ENCODE measurements at regions of chr6 and their contacts with region 1.

Region 1: GRCh38 chr6:137707590-137708360 is 159.3 kb upstream of the TNFAIP3 start:
- DNase-seq: peak; percentile 68
- H3K4me3 ChIP-seq: peak overlapping the region in 1 of 3 experiments; percentile 30
- H3K27ac ChIP-seq: no peak overlapping the region
- H3K4me1 ChIP-seq: peaks cover 4% of the 10 kb centered on the region
- H3K27me3 ChIP-seq: no peaks in the 10 kb centered on the region
- CTCF ChIP-seq: peak; percentile 60 to 68
- POLR2A ChIP-seq: no peak

Region 2: GRCh38 chr6:137799950-137800568 is 92.3 kb after region 1 on chr6:
- CTCF ChIA-PET with region 1: interaction called, 39 read pairs
- POLR2A ChIA-PET with region 1: no interaction called
- dilution Hi-C with region 1: no loop called
- intact Hi-C with region 1: loop called (anchors 5 kb)
- DNase-seq: peak; percentile 68
- H3K4me3 ChIP-seq: no peak overlapping the region
- H3K27ac ChIP-seq: no peak overlapping the region
- H3K4me1 ChIP-seq: no peaks in the 10 kb centered on the region
- H3K27me3 ChIP-seq: no peaks in the 10 kb centered on the region
- CTCF ChIP-seq: peak; percentile 53 to 66
- POLR2A ChIP-seq: no peak

Region 3: DNA sequence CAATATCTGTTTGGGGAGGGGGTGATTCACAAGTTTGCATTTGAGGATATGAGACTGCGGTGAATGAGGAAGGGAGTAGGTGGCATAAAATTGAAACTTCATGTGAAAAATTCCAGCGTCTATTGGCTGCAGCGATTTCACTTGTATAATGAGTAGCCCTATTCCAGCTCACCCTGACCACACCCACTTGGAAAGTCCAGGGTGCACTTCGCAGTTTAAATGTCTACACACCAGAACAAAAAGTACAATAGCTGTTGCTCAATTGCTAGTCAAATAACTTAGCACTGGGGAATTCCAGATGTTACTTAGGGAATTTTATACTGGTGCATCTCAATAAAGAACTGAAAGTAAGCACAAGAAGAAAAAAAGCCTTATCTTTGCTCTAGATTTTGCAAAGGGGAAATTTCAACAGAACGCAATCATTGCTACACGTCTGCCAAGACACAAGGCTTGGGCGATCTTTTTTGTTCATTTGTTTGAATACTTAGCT is 165.5 kb after region 1 on chr6:
- CTCF ChIA-PET with region 1: interaction called, 64 read pairs
- POLR2A ChIA-PET with region 1: interaction called, 3 read pairs
- dilution Hi-C with region 1: no loop called
- intact Hi-C with region 1: no loop called
- DNase-seq: peak; percentile 88
- H3K4me3 ChIP-seq: no peak overlapping the region
- H3K27ac ChIP-seq: peak overlapping the region; percentile 53
- H3K4me1 ChIP-seq: peaks cover 41% of the 10 kb centered on the region
- H3K27me3 ChIP-seq: no peaks in the 10 kb centered on the region
- CTCF ChIP-seq: no peak
- POLR2A ChIP-seq: peak; percentile 22

Region 4: DNA sequence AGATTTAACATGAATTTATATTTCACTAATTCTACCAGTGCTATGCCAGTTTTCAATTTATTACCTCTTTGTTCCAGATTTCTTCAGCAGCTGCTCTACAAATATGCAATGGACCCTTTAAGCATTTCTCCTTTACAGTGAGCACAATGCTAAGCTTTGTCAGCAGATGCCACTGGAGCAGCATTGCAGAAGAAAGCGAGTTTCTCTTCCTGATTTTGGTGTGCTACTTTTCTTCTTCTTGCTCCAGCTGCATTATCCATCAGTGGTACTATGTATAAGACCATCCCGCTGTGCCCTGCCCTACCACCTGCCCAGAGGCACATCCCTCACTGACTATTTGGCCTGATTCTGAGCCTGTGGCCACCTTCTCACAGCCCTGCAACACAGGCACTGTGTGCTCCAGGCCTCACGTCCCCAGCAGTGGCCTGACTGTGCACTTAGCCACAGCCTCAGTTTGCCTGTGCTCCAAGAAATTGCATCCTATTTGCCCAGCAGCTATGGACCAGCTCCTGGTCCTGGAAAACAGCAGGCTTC is 243.4 kb after region 1 on chr6:
- CTCF ChIA-PET with region 1: interaction called, 103 read pairs
- POLR2A ChIA-PET with region 1: no interaction called
- dilution Hi-C with region 1: no loop called
- intact Hi-C with region 1: no loop called
- DNase-seq: no peak
- H3K4me3 ChIP-seq: no peak overlapping the region
- H3K27ac ChIP-seq: no peak overlapping the region
- H3K4me1 ChIP-seq: no peaks in the 10 kb centered on the region
- H3K27me3 ChIP-seq: no peaks in the 10 kb centered on the region
- CTCF ChIP-seq: no peak
- POLR2A ChIP-seq: no peak

Region 5: DNA sequence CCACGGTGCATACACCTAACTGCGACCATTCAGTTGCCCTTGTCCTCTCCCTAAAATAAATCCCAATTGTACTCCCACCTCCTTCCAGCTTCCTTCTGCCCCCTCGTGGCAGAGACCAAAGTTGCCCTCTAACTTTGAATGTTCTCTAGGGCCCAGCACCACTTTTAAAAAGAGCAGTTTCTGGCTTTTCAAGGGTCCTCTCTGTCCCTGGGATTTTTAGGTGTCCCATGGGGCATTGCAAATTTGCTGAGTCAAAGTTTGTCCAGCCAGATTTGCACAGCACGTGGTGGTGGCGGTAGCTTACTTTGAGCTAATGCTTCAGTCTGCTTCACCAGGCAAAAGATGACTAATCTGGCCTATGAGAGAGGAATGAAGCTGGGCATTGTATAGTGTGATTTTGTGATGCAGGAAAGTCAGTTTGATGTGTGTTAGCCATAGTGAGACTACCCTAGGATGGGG is 299.3 kb after region 1 on chr6:
- CTCF ChIA-PET with region 1: interaction called, 72 read pairs
- POLR2A ChIA-PET with region 1: no interaction called
- dilution Hi-C with region 1: no loop called
- intact Hi-C with region 1: loop called (anchors 1 kb)
- DNase-seq: peak; percentile 27
- H3K4me3 ChIP-seq: no peak overlapping the region
- H3K27ac ChIP-seq: no peak overlapping the region
- H3K4me1 ChIP-seq: no peaks in the 10 kb centered on the region
- H3K27me3 ChIP-seq: no peaks in the 10 kb centered on the region
- CTCF ChIP-seq: peak; percentile 50 to 63
- POLR2A ChIP-seq: no peak

Measured in endothelial cell of umbilical vein (primary cell).